ENCODE measurements at regions of chr13 and their contacts with region 1.

Region 1: GRCh38 chr13:31629085-31629780 is 110.1 kb upstream of the RXFP2 start:
- DNase-seq: no peak
- H3K4me3 ChIP-seq: no peak overlapping the region
- H3K27ac ChIP-seq: no peak overlapping the region
- H3K4me1 ChIP-seq: no peaks in the 10 kb centered on the region
- H3K27me3 ChIP-seq: no peaks in the 10 kb centered on the region
- CTCF ChIP-seq: no peak
- EP300 ChIP-seq: no peak
- POLR2A ChIP-seq: no peak

Region 2: DNA sequence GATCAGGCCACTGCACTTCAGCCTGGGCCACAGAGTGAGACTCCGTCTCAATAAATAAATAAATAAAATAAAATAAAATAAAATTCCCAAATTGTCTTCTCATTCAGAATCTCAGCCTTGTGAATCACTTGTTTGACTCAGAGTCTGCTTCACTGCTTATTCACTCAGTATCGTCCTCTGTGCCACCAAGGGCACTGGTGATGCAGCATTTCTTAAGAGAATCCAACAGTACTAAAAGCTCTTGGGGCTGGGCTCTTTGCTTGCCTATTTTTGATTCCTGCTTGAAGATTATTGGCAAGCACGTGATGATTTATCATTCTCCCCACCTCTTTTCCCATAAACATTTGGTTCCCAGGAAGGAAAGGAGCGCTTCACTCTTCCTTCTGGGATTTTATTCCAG is 1108.7 kb before region 1 on chr13:
- in situ Hi-C with region 1: no loop called
- intact Hi-C with region 1: no loop called
- DNase-seq: no peak
- H3K4me3 ChIP-seq: no peak overlapping the region
- H3K27ac ChIP-seq: no peak overlapping the region
- H3K4me1 ChIP-seq: no peaks in the 10 kb centered on the region
- H3K27me3 ChIP-seq: no peaks in the 10 kb centered on the region
- CTCF ChIP-seq: no peak
- EP300 ChIP-seq: no peak
- POLR2A ChIP-seq: no peak

Region 3: DNA sequence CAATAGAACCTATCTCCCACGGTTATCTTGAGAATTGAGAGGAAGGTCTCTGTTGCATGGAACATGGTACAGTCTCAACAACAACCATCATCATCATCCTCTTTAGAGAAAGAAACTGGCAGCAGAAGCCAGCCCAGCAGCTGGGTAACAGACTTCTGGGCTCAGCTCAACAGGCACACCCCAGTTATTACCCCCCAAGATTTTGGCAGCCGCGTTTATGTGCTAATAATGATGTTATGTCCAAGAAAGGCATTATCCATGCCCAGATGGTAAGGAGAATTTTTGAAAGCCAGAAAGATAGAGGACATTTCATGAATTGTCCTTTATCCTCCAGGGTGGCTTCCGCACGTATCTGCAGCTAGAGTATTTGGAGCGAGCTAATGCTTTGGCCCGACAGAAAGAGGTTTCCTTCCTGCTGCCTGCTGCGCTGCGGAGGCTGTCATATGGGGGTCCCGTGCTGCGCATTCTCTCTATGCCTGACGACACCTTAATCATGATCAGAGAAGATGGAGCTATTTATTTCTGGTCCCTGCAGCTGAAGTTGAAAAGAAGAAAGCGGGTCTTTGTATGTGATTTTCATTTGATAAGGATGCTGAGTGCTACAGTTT is 606.8 kb before region 1 on chr13:
- in situ Hi-C with region 1: no loop called
- intact Hi-C with region 1: loop called (anchors 5 kb)
- DNase-seq: no peak
- H3K4me3 ChIP-seq: no peak overlapping the region
- H3K27ac ChIP-seq: no peak overlapping the region
- H3K4me1 ChIP-seq: no peaks in the 10 kb centered on the region
- H3K27me3 ChIP-seq: no peaks in the 10 kb centered on the region
- CTCF ChIP-seq: no peak
- EP300 ChIP-seq: no peak
- POLR2A ChIP-seq: no peak

Region 4: GRCh38 chr13:31485651-31486051 is 143.6 kb before region 1 on chr13:
- in situ Hi-C with region 1: no loop called
- intact Hi-C with region 1: loop called (anchors 5 kb)
- DNase-seq: no peak
- H3K4me3 ChIP-seq: no peak overlapping the region
- H3K27ac ChIP-seq: no peak overlapping the region
- H3K4me1 ChIP-seq: no peaks in the 10 kb centered on the region
- H3K27me3 ChIP-seq: no peaks in the 10 kb centered on the region
- CTCF ChIP-seq: no peak
- EP300 ChIP-seq: no peak
- POLR2A ChIP-seq: no peak